ENCODE measurements at regions of chr4 and their contacts with region 1.

Region 1: DNA sequence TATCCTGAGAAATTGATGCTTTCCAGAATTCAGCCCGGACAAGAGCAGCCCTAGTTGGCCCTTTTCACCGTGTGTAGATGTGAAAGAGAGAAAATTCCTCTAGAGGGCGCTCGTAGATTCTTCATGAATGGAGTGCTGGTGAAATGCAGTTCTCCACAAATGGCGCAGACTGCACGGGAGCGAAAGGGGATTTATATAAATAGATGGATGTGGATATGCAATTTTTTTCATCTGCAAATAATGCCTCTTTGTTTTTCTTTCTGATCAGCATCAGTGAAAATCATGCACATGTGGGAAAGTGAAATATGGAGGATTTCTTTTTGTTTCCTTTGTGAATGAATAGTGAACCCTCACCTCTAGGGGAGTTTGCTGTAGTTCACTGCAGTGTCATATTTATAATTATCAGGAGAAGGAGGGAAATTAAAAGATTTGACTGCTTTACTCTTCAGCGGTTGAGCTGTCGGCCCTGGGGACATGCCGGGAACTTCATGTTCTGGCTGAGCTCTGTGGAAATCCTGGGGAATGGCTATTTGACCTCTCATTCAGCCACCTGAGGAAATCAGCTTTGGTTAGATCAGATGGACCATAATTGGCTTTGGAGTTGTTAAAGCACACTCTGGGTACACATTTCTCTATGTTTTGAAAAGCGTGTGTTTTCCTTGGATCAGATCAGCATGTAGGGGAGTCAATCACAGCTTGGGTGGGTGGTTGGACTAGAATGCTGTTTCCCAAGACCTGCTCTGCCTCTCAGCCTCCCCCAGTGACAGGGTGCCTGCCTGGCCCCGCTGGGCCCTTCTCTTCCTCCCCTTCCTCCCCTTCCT is 115.0 kb upstream of the SHISA3 start:
- DNase-seq: peak; percentile 68
- ATAC-seq: peak; percentile 95
- H3K4me3 ChIP-seq: no peak overlapping the region
- H3K27ac ChIP-seq: peak overlapping the region; percentile 4; the same call in 1 of the 2 replicates
- H3K4me1 ChIP-seq: no peaks in the 10 kb centered on the region; the same call in 1 of the 2 replicates
- H3K27me3 ChIP-seq: no peaks in the 10 kb centered on the region
- CTCF ChIP-seq: peak; percentile 75
- POLR2A ChIP-seq: no peak
- RAD21 ChIP-seq: peak; percentile 74

Region 2: GRCh38 chr4:42132099-42132498 is 150.2 kb before region 1 on chr4:
- CTCF ChIA-PET with region 1: no interaction called
- POLR2A ChIA-PET with region 1: interaction called, 26 read pairs
- dilution Hi-C with region 1: no loop called
- in situ Hi-C with region 1: no loop called
- intact Hi-C with region 1: no loop called
- DNase-seq: no peak
- ATAC-seq: no peak
- H3K4me3 ChIP-seq: no peak overlapping the region
- H3K27ac ChIP-seq: no peak overlapping the region
- H3K4me1 ChIP-seq: no peaks in the 10 kb centered on the region
- H3K27me3 ChIP-seq: no peaks in the 10 kb centered on the region
- CTCF ChIP-seq: no peak
- POLR2A ChIP-seq: no peak
- RAD21 ChIP-seq: no peak

Region 3: DNA sequence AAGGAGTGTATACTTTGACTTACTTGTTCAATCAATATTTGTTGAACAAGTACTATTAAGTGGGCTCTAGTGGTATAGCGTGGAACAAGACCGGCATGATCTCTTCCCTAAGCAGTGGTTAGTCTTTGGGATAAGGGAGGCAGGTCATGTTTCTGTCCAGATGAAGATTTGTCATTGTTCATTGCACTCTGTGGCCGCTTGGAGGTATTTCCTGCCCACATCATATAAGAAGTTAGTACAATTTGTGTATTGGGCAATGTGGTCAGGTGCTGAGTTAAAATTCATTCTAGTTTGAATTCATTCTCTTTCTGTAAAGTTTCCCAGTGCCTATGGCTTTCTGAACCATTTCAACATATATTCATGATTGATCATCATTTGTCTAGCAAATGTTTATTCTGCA is 13.9 kb after region 1 on chr4:
- CTCF ChIA-PET with region 1: no interaction called
- POLR2A ChIA-PET with region 1: no interaction called
- dilution Hi-C with region 1: no loop called
- in situ Hi-C with region 1: no loop called
- intact Hi-C with region 1: no loop called
- DNase-seq: no peak
- ATAC-seq: no peak
- H3K4me3 ChIP-seq: no peak overlapping the region
- H3K27ac ChIP-seq: no peak overlapping the region
- H3K4me1 ChIP-seq: no peaks in the 10 kb centered on the region
- H3K27me3 ChIP-seq: peaks cover 2% of the 10 kb centered on the region; the same call in 1 of the 2 replicates
- CTCF ChIP-seq: no peak
- POLR2A ChIP-seq: no peak
- RAD21 ChIP-seq: no peak

Region 4: GRCh38 chr4:42371306-42372252 is 89.3 kb after region 1 on chr4:
- CTCF ChIA-PET with region 1: interaction called, 3 read pairs
- POLR2A ChIA-PET with region 1: no interaction called
- dilution Hi-C with region 1: no loop called
- in situ Hi-C with region 1: no loop called
- intact Hi-C with region 1: loop called (anchors 1 kb)
- DNase-seq: peak; percentile 60
- ATAC-seq: peak; percentile 66
- H3K4me3 ChIP-seq: no peak overlapping the region
- H3K27ac ChIP-seq: no peak overlapping the region; the same call in 1 of the 2 replicates
- H3K4me1 ChIP-seq: no peaks in the 10 kb centered on the region; the same call in 1 of the 2 replicates
- H3K27me3 ChIP-seq: no peaks in the 10 kb centered on the region
- CTCF ChIP-seq: peak; percentile 70
- POLR2A ChIP-seq: no peak
- RAD21 ChIP-seq: peak; percentile 69

Region 5: DNA sequence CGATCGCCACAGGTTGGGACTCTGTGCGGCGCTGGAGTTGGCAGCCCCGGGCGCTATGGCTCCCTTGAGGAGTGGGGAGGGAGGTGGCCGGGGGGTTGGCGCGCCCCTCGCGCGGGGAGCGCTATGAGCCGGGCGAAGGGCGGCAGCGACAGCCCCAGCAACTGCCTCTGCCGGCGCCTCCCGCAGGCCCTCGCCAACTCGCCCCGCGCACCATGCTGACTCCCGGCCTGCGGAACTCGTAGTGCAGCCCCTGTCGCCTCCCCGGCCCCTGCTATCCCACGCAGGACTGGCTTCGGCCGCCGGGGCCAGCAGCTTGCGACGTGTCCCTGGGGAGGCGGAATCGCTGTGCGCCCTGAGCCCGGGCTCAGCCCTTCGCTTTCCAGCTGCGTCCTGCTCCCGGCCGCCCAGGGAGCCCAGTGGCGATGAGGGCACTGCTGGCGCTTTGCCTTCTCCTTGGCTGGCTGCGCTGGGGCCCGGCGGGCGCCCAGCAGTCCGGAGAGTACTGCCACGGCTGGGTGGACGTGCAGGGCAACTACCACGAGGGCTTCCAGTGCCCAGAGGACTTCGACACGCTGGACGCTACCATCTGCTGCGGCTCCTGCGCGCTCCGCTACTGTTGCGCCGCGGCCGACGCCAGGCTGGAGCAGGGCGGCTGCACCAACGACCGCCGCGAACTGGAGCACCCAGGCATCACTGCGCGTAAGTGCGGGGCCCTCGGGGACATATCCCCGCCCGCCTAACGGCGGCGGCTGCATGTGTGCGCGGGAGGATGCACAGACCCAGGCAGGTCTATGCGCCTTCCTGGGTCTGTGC is 115.5 kb after region 1 on chr4:
- CTCF ChIA-PET with region 1: no interaction called
- POLR2A ChIA-PET with region 1: no interaction called
- dilution Hi-C with region 1: no loop called
- in situ Hi-C with region 1: no loop called
- intact Hi-C with region 1: loop called (anchors 2 kb)
- DNase-seq: peak; percentile 12
- ATAC-seq: peak; percentile 53
- H3K4me3 ChIP-seq: peak overlapping the region; percentile 78
- H3K27ac ChIP-seq: peak overlapping the region; percentile 28
- H3K4me1 ChIP-seq: no peaks in the 10 kb centered on the region
- H3K27me3 ChIP-seq: peaks cover 2% of the 10 kb centered on the region; the same call in 1 of the 2 replicates
- CTCF ChIP-seq: no peak
- POLR2A ChIP-seq: no peak
- RAD21 ChIP-seq: no peak